Dendritic cell treated with granulocyte-macrophage colony-stimulating factor and Interleukin-4, amounts not matched to agents 40 ng/mL and 50 ng/mL, for 4 days (primary cell): ENCODE measurements at regions of chr10 and their contacts with region 1.

Region 1: GRCh38 chr10:53839440-53840039 is 961.5 kb downstream of the PCDH15 start:
- H3K4me3 Mint-ChIP-seq: no peak overlapping the region
- H3K27ac Mint-ChIP-seq: no peak overlapping the region
- H3K4me1 Mint-ChIP-seq: no peaks in the 10 kb centered on the region
- H3K27me3 Mint-ChIP-seq: no peaks in the 10 kb centered on the region

Region 2: GRCh38 chr10:53918755-53919154 is 79.2 kb after region 1 on chr10:
- intact Hi-C with region 1: no loop called
- H3K4me3 Mint-ChIP-seq: no peak overlapping the region
- H3K27ac Mint-ChIP-seq: no peak overlapping the region
- H3K4me1 Mint-ChIP-seq: no peaks in the 10 kb centered on the region
- H3K27me3 Mint-ChIP-seq: no peaks in the 10 kb centered on the region

Region 3: GRCh38 chr10:54402576-54402975 is 563.0 kb after region 1 on chr10:
- intact Hi-C with region 1: loop called (anchors 5 kb)
- H3K4me3 Mint-ChIP-seq: no peak overlapping the region
- H3K27ac Mint-ChIP-seq: no peak overlapping the region
- H3K4me1 Mint-ChIP-seq: no peaks in the 10 kb centered on the region
- H3K27me3 Mint-ChIP-seq: no peaks in the 10 kb centered on the region